ENCODE measurements at regions of chr14 and their contacts with region 1.

Region 1: GRCh38 chr14:50085570-50086320 is 30.6 kb downstream of the VCPKMT start:
- DNase-seq: peak in 3 of 10 donors; percentile 26 to 49 (median 37)
- ATAC-seq: no peak
- H3K4me3 Mint-ChIP-seq: peak overlapping the region; percentile 15 to 82 (median 68)
- H3K27ac Mint-ChIP-seq: peak overlapping the region; percentile 79 to 97 (median 93)
- H3K4me1 Mint-ChIP-seq: peaks cover 39 to 94% (median 88%) of the 10 kb centered on the region in 4 donors
- H3K27me3 Mint-ChIP-seq: no peaks in the 10 kb centered on the region

Region 2: GRCh38 chr14:49971156-49972130 is 114.3 kb before region 1 on chr14:
- POLR2A ChIA-PET with region 1: interaction called, 17 read pairs
- DNase-seq: peak; percentile 19 to 91 (median 68)
- ATAC-seq: peak; percentile 86 to 91
- H3K4me3 Mint-ChIP-seq: peak overlapping the region; percentile 68 to 90 (median 83)
- H3K27ac Mint-ChIP-seq: peak overlapping the region; percentile 93 to 98 (median 96)
- H3K4me1 Mint-ChIP-seq: peaks cover 37 to 74% (median 62%) of the 10 kb centered on the region in 4 donors
- H3K27me3 Mint-ChIP-seq: no peaks in the 10 kb centered on the region

Region 3: GRCh38 chr14:50045039-50045711 is 40.6 kb before region 1 on chr14:
- POLR2A ChIA-PET with region 1: interaction called, 12 read pairs
- DNase-seq: peak in 9 of 10 donors; percentile 23 to 83 (median 62)
- ATAC-seq: peak; percentile 71 to 82
- H3K4me3 Mint-ChIP-seq: peak overlapping the region; percentile 6 to 87 (median 64)
- H3K27ac Mint-ChIP-seq: peak overlapping the region; percentile 85 to 98 (median 92)
- H3K4me1 Mint-ChIP-seq: peaks cover 49 to 76% (median 76%) of the 10 kb centered on the region in 4 donors
- H3K27me3 Mint-ChIP-seq: no peaks in the 10 kb centered on the region

Region 4: GRCh38 chr14:50099335-50099734 is 13.6 kb after region 1 on chr14:
- POLR2A ChIA-PET with region 1: interaction called, 59 read pairs
- DNase-seq: no peak
- ATAC-seq: peak in 1 of 2 donors; percentile 48
- H3K4me3 Mint-ChIP-seq: peak overlapping the region in 9 of 10 donors; percentile 17 to 79 (median 52)
- H3K27ac Mint-ChIP-seq: peak overlapping the region; percentile 36 to 95 (median 82)
- H3K4me1 Mint-ChIP-seq: peaks cover 35 to 82% (median 71%) of the 10 kb centered on the region in 4 donors
- H3K27me3 Mint-ChIP-seq: no peaks in the 10 kb centered on the region

Region 5: DNA sequence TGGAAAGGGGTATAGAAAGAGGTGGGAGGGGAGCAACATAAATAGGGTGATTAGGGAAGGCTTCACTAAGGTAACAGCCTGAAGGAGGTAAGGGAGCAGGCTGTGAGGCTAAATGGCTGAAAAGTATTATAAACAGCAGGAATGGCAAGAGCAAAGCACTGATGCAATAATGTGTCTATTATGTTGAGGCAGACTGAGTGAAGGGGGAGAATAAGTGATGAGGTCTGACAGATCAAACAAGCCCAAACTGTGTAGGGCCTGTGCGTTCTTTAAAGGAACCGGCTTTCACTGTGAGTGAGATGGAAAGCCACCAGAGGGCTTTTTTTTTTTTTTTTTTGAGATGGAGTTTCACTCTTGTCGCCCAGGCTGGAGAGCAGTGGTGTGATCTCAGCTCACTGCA is 37.3 kb after region 1 on chr14:
- POLR2A ChIA-PET with region 1: no interaction called
- DNase-seq: no peak
- ATAC-seq: no peak
- H3K4me3 Mint-ChIP-seq: no peak overlapping the region
- H3K27ac Mint-ChIP-seq: no peak overlapping the region
- H3K4me1 Mint-ChIP-seq: peaks cover 0 to 5% (median 2%) of the 10 kb centered on the region in 4 donors
- H3K27me3 Mint-ChIP-seq: no peaks in the 10 kb centered on the region